WTC11 (cell line): ENCODE measurements at regions of chr6 and their contacts with region 1.

Region 1: GRCh38 chr6:152338335-152339125 is 298.6 kb downstream of the SYNE1 start:
- DNase-seq: peak; percentile 52
- ATAC-seq: peak; percentile 83
- H3K4me3 Mint-ChIP-seq: no peak overlapping the region
- H3K27ac Mint-ChIP-seq: no peak overlapping the region
- H3K4me1 Mint-ChIP-seq: no peaks in the 10 kb centered on the region
- H3K27me3 Mint-ChIP-seq: no peaks in the 10 kb centered on the region
- CTCF ChIP-seq: peak; percentile 76

Region 2: GRCh38 chr6:152301764-152302568 is 36.6 kb before region 1 on chr6:
- CTCF ChIA-PET with region 1: interaction called, 21 read pairs
- POLR2A ChIA-PET with region 1: no interaction called
- DNase-seq: peak; percentile 88
- ATAC-seq: peak; percentile 98
- H3K4me3 Mint-ChIP-seq: peak overlapping the region; percentile 95
- H3K27ac Mint-ChIP-seq: peak overlapping the region; percentile 93
- H3K4me1 Mint-ChIP-seq: peaks cover 34% of the 10 kb centered on the region
- H3K27me3 Mint-ChIP-seq: no peaks in the 10 kb centered on the region
- CTCF ChIP-seq: peak; percentile 49; the same call in 1 of the 2 replicates

Region 3: DNA sequence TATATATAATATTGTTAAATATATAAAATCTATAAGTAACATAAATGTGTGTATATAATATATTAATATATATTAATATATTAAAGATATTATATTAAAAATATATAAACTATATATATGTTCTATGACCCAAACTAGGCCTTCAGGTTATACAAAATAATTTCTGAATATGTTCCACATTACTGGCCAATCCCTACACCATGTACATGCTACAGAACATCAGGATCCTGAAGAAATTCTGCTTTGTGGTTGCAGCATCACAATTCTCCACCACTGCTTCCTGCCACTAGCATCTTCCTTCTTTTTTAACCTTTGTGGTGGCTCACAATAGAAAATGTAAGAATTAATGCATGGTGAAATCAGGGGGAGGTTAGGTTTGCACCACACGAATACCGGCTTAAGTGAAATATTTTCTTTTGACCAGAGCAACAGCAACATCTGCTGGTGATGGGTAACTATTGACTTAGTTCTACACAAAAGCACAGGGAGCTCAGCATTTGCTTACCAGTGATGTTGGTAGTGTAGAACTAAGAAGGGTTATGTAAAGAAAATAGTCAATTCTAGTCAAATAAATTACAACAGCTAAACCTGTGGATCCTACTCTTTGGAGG is 18.0 kb after region 1 on chr6:
- CTCF ChIA-PET with region 1: interaction called, 16 read pairs
- POLR2A ChIA-PET with region 1: no interaction called
- DNase-seq: no peak
- ATAC-seq: peak; percentile 89
- H3K4me3 Mint-ChIP-seq: no peak overlapping the region
- H3K27ac Mint-ChIP-seq: no peak overlapping the region
- H3K4me1 Mint-ChIP-seq: no peaks in the 10 kb centered on the region
- H3K27me3 Mint-ChIP-seq: no peaks in the 10 kb centered on the region
- CTCF ChIP-seq: no peak

Region 4: DNA sequence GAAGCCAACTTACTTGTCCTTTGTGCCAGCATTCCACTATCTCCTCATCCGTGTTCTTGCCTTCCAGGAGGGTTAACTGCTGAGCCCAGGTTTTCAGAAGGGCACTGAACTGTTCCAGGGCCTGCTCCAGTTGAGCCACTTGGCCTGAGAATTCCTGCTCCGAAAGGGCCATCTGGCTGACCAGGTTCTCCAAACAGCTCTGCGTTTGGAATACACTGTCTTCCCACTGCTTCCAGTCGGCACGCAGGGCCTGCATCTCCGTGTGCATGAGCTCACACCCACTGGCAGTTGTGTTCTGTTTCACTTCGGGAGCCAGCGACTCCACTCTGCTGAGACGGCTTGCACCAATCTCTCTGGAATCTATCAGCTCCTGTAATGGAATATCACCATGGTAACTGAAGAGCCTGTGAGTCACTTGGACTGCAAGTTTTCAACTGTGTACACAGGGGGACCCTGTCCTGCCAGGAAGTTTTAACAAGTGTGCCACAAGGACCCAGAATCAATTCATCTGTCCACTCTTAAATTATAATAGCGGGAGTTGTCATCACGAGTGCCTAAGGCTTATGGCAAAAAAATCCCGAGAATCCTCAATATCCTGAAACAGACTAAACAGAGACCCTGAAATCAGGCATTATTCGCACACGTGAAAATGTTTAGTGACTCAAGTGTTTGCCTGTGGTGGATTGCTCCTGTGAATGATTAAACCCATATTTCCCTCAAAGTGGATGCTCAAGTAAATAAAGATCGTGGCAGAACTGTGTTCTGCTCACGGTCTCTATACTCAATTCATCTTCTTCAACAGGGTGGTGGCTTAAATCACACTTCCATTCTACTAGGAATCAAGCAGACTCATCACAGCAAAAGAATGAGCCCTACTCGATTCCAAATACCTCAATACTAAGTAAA is 42.7 kb after region 1 on chr6:
- CTCF ChIA-PET with region 1: no interaction called
- POLR2A ChIA-PET with region 1: no interaction called
- DNase-seq: no peak
- ATAC-seq: peak; percentile 60
- H3K4me3 Mint-ChIP-seq: no peak overlapping the region
- H3K27ac Mint-ChIP-seq: no peak overlapping the region
- H3K4me1 Mint-ChIP-seq: peaks cover 9% of the 10 kb centered on the region; the same call in 1 of the 2 replicates
- H3K27me3 Mint-ChIP-seq: no peaks in the 10 kb centered on the region
- CTCF ChIP-seq: no peak